Astrocyte of the cerebellum (primary cell): ENCODE measurements at regions of chr9 and their contacts with region 1.

Region 1: GRCh38 chr9:20356403-20357035 is 265.8 kb downstream of the MLLT3 start:
- DNase-seq: peak; percentile 65
- H3K4me3 ChIP-seq: no peak overlapping the region
- CTCF ChIP-seq: peak; percentile 72

Region 2: GRCh38 chr9:20551236-20551635 is 194.7 kb after region 1 on chr9:
- in situ Hi-C with region 1: no loop called
- DNase-seq: no peak
- H3K4me3 ChIP-seq: no peak overlapping the region
- CTCF ChIP-seq: no peak

Region 3: GRCh38 chr9:20921362-20921761 is 564.8 kb after region 1 on chr9:
- in situ Hi-C with region 1: loop called (anchors 5 kb)
- DNase-seq: no peak
- H3K4me3 ChIP-seq: no peak overlapping the region
- CTCF ChIP-seq: no peak

Region 4: GRCh38 chr9:21119093-21119770 is 762.7 kb after region 1 on chr9:
- in situ Hi-C with region 1: loop called (anchors 5 kb)
- DNase-seq: no peak
- H3K4me3 ChIP-seq: no peak overlapping the region
- CTCF ChIP-seq: no peak